Esophagus muscularis mucosa (tissue), 4 donors: ENCODE measurements at regions of chr12 and their contacts with region 1.

Region 1: DNA sequence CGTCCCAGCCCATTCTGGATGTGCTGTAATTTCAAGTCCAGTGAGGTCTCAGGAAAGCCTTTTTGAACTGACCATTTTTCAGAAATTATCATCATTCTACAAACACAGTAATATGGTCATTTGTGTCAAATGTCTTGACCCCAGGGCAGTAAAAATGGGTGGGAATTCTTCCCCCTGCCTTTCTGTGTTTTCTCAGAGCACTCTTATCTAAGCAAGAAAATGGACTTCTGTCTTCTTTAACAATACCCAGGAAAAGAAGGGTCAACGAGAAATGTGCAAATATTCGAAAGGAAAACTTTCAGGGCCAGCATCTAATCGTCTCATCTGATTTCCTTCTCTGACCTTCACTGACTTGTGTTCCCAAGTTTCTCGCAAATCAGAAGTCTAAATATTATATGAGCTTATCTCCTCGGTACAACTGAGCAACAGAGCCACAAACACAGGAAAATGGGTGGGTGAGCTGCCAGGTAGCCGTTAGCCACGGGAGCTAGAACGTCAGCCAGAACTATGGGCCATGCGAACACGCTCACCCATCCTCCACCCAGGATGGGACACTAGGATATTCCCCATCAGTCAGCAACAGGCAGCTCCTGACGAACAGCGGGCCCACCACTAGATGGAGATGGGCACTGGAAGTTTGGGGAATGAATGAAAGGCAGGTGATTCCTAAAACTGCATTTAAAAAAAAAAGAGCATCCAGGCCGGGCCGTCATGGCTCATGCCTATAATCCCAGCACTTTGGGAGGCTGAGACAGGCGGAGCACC is 57.1 kb downstream of the VWF start:
- DNase-seq: no peak
- H3K4me3 ChIP-seq: no peak overlapping the region
- H3K27ac ChIP-seq: no peak overlapping the region
- H3K4me1 ChIP-seq: peaks cover 8 to 30% (median 23%) of the 10 kb centered on the region in 4 donors
- H3K27me3 ChIP-seq: no peaks in the 10 kb centered on the region
- CTCF ChIP-seq: peak; percentile 41 to 55 (median 43)
- EP300 ChIP-seq: no peak
- POLR2A ChIP-seq: no peak

Region 2: GRCh38 chr12:6183689-6184428 is 116.5 kb after region 1 on chr12:
- intact Hi-C with region 1: loop called (anchors 2 kb)
- DNase-seq: no peak
- H3K4me3 ChIP-seq: no peak overlapping the region
- H3K27ac ChIP-seq: peak overlapping the region; percentile 73 to 84 (median 78)
- H3K4me1 ChIP-seq: peaks cover 40 to 82% (median 75%) of the 10 kb centered on the region in 4 donors
- H3K27me3 ChIP-seq: no peaks in the 10 kb centered on the region
- CTCF ChIP-seq: no peak
- EP300 ChIP-seq: no peak
- POLR2A ChIP-seq: no peak

Region 3: GRCh38 chr12:6285063-6285477 is 217.7 kb after region 1 on chr12:
- intact Hi-C with region 1: loop called (anchors 1 kb)
- DNase-seq: no peak
- H3K4me3 ChIP-seq: no peak overlapping the region
- H3K27ac ChIP-seq: no peak overlapping the region
- H3K4me1 ChIP-seq: peaks cover 7 to 23% (median 17%) of the 10 kb centered on the region in 4 donors
- H3K27me3 ChIP-seq: no peaks in the 10 kb centered on the region
- CTCF ChIP-seq: peak in 2 of 3 experiments; percentile 94 to 98
- EP300 ChIP-seq: no peak
- POLR2A ChIP-seq: no peak